ENCODE measurements at regions of chr18 and their contacts with region 1.

Region 1: DNA sequence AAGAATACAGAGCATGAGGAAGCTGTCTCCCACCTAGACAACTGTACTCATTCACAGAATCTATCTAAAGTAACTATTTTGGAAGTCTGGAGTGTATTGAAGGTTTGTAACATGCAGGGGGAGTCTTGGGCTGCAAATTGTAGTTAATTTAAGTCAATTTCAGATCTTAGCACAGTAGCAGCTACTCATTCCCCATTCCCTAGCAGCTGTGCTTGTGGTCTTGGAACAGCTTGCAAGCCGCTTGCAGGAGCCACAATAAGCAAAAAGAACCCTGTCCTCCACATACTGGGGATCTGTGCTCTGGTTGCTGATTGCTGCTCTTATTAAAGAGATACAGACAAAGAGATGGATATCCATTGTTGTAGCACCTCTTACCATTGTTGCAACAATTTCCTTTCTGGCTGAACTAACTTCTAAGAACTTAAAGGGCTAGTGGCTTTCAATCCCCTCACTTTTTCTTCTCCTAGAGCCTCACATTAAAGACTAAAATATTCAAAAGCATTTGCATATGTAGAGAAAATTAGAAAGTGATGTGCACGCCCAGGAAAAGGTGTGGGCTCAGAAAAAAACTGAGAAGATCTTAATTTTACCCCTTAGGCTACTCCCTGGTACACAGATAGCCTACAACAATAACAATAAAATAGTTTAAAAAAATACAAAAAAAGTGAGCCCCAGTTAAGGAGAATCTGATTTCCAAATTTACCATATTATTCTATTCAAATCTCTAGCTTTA is 1775.1 kb upstream of the PIK3C3 start:
- DNase-seq: no peak
- H3K4me3 ChIP-seq: no peak overlapping the region
- H3K27ac ChIP-seq: no peak overlapping the region
- H3K4me1 ChIP-seq: peaks cover 0 to 5% (median 0%) of the 10 kb centered on the region in 4 experiments; a peak in 2 of 7 replicates
- H3K27me3 ChIP-seq: no peaks in the 10 kb centered on the region
- CTCF ChIP-seq: peak in 1 of 3 experiments; percentile 9; a peak in 1 of 4 replicates
- EP300 ChIP-seq: no peak
- POLR2A ChIP-seq: no peak
- RAD21 ChIP-seq: peak; percentile 38 to 43; a peak in 3 of 4 replicates

Region 2: DNA sequence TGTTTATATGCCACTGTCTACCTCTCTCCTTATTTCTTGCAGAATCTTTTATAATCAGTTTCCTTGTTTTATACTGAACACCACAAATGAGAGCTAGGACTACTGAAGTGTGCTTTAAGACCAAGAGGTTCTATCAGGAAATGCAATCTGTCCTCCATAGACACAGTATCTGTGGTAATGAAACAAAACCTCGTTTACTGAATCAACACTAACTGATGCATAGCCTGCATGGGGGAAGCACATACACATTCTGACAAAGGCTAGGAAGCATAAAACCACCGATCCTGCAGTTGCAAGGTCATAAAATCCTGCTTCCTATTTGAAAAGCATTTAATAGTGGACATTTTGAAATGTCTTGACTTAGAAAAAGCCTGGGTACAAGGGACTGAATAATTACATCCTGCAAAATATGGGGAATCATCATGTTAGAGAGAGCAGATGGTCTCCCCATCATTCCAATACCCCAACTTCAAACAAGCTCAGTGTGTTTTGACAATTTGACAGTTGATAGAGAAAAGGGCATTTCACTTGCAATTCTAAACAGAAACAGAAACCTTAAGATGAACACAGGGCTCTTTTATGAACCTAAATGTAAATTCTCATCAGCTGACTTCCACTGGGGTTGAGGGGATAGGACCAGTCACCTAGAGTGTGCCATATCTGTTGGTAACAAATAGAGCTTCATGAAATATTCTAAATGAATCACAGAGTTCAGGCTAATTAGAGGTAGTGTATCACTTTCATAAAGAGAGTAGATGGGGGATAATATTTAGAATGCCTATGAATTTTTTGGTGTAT is 70.4 kb before region 1 on chr18:
- CTCF ChIA-PET with region 1: no interaction called
- POLR2A ChIA-PET with region 1: no interaction called
- DNase-seq: no peak
- H3K4me3 ChIP-seq: no peak overlapping the region
- H3K27ac ChIP-seq: no peak overlapping the region
- H3K4me1 ChIP-seq: no peaks in the 10 kb centered on the region
- H3K27me3 ChIP-seq: no peaks in the 10 kb centered on the region
- CTCF ChIP-seq: no peak
- EP300 ChIP-seq: no peak
- POLR2A ChIP-seq: no peak
- RAD21 ChIP-seq: no peak

Region 3: GRCh38 chr18:40159141-40160017 is 20.5 kb before region 1 on chr18:
- CTCF ChIA-PET with region 1: interaction called, 15 read pairs
- POLR2A ChIA-PET with region 1: no interaction called
- DNase-seq: no peak
- H3K4me3 ChIP-seq: no peak overlapping the region
- H3K27ac ChIP-seq: no peak overlapping the region
- H3K4me1 ChIP-seq: no peaks in the 10 kb centered on the region
- H3K27me3 ChIP-seq: no peaks in the 10 kb centered on the region
- CTCF ChIP-seq: peak in 2 of 3 experiments; percentile 31 to 54; a peak in 2 of 4 replicates
- EP300 ChIP-seq: no peak
- POLR2A ChIP-seq: no peak
- RAD21 ChIP-seq: peak; percentile 76 to 80